ENCODE measurements at regions of chr12 and their contacts with region 1.

Region 1: GRCh38 chr12:101939856-101940265 is 62.5 kb downstream of the DRAM1 start:
- DNase-seq: peak; percentile 67 to 80
- H3K4me3 ChIP-seq: no peak overlapping the region
- H3K4me3 Mint-ChIP-seq: peak overlapping the region; percentile 30
- H3K27ac Mint-ChIP-seq: peak overlapping the region; percentile 76
- H3K4me1 ChIP-seq: peaks cover 15% of the 10 kb centered on the region
- H3K4me1 Mint-ChIP-seq: no peaks in the 10 kb centered on the region
- H3K27me3 ChIP-seq: no peaks in the 10 kb centered on the region
- H3K27me3 Mint-ChIP-seq: no peaks in the 10 kb centered on the region
- CTCF ChIP-seq: peak; percentile 76 to 81

Region 2: GRCh38 chr12:101773650-101774162 is 166.2 kb before region 1 on chr12:
- CTCF ChIA-PET with region 1: no interaction called
- POLR2A ChIA-PET with region 1: no interaction called
- intact Hi-C with region 1: loop called (anchors 5 kb)
- DNase-seq: peak; percentile 53 to 65
- H3K4me3 ChIP-seq: no peak overlapping the region
- H3K4me3 Mint-ChIP-seq: no peak overlapping the region
- H3K27ac Mint-ChIP-seq: no peak overlapping the region
- H3K4me1 ChIP-seq: no peaks in the 10 kb centered on the region
- H3K4me1 Mint-ChIP-seq: peaks cover 7% of the 10 kb centered on the region
- H3K27me3 ChIP-seq: no peaks in the 10 kb centered on the region
- H3K27me3 Mint-ChIP-seq: no peaks in the 10 kb centered on the region
- CTCF ChIP-seq: peak; percentile 84 to 91

Region 3: GRCh38 chr12:101857043-101857558 is 82.8 kb before region 1 on chr12:
- CTCF ChIA-PET with region 1: no interaction called
- POLR2A ChIA-PET with region 1: no interaction called
- intact Hi-C with region 1: no loop called
- DNase-seq: no peak
- H3K4me3 ChIP-seq: no peak overlapping the region
- H3K4me3 Mint-ChIP-seq: no peak overlapping the region
- H3K27ac Mint-ChIP-seq: no peak overlapping the region
- H3K4me1 ChIP-seq: peaks cover 12% of the 10 kb centered on the region
- H3K4me1 Mint-ChIP-seq: peaks cover 13% of the 10 kb centered on the region
- H3K27me3 ChIP-seq: no peaks in the 10 kb centered on the region
- H3K27me3 Mint-ChIP-seq: no peaks in the 10 kb centered on the region
- CTCF ChIP-seq: no peak

Region 4: DNA sequence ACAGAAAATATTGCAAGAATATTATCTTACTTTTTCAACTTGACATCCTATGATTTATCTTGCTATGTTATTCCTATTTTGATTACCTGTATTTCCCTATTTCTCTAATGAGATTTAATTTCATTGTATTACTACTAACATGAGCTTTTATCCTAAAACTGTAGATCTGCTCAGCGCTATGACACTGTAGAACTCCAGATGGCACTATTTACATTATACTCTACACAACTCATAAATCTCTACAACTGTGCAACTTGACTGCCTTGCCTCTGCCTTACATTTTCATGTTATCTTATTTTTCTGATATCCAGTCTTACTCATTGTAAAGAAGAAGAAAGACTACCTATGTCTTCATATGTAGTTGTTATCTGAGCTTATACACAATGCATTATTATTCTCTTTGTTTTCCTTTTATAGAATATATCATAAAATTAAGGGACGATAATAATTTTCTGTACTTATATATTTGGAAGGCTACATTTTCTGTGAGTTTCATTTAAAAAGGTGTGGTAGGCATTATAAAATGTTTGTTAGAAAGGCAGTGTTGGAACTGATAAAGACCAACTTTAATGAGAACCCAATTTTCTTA is 155.9 kb after region 1 on chr12:
- CTCF ChIA-PET with region 1: no interaction called
- POLR2A ChIA-PET with region 1: no interaction called
- intact Hi-C with region 1: loop called (anchors 2 kb)
- DNase-seq: peak in 1 of 2 experiments; percentile 12
- H3K4me3 ChIP-seq: no peak overlapping the region
- H3K4me3 Mint-ChIP-seq: no peak overlapping the region
- H3K27ac Mint-ChIP-seq: no peak overlapping the region
- H3K4me1 ChIP-seq: no peaks in the 10 kb centered on the region
- H3K4me1 Mint-ChIP-seq: no peaks in the 10 kb centered on the region
- H3K27me3 ChIP-seq: no peaks in the 10 kb centered on the region
- H3K27me3 Mint-ChIP-seq: no peaks in the 10 kb centered on the region
- CTCF ChIP-seq: peak; percentile 44 to 50

Region 5: GRCh38 chr12:102169922-102170621 is 230.2 kb after region 1 on chr12:
- CTCF ChIA-PET with region 1: no interaction called
- POLR2A ChIA-PET with region 1: no interaction called
- intact Hi-C with region 1: loop called (anchors 5 kb)
- DNase-seq: no peak
- H3K4me3 ChIP-seq: no peak overlapping the region
- H3K4me3 Mint-ChIP-seq: no peak overlapping the region
- H3K27ac Mint-ChIP-seq: no peak overlapping the region
- H3K4me1 ChIP-seq: no peaks in the 10 kb centered on the region
- H3K4me1 Mint-ChIP-seq: no peaks in the 10 kb centered on the region
- H3K27me3 ChIP-seq: no peaks in the 10 kb centered on the region
- H3K27me3 Mint-ChIP-seq: no peaks in the 10 kb centered on the region
- CTCF ChIP-seq: peak; percentile 61 to 65

Region 6: DNA sequence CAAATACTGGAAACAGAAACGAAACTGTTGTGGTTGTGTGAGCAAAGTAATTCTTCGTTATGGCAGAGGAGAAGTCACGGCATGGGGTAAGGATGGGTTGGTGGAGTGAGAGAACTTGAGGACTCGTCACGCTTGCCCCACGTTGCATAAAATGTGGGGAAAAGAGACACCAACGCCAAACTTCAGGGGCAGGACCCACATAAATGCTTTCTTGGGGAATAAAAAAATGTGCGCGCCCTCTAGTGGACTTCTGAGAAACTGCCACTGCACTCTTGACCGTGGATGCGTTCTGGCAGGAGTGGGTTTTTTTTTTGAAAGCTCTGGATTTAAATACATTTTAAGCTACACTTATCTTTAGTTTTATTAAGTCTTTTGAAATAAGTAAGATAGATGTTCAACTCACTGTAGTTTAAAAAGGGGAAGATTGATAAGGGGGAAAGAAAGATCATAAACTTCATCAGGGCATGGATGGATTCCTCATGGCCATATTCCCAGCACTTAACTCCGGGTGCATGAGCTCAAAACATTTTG is 544.6 kb after region 1 on chr12:
- CTCF ChIA-PET with region 1: interaction called, 3 read pairs
- POLR2A ChIA-PET with region 1: no interaction called
- intact Hi-C with region 1: loop called (anchors 1 kb)
- DNase-seq: peak; percentile 34 to 42
- H3K4me3 ChIP-seq: no peak overlapping the region
- H3K4me3 Mint-ChIP-seq: no peak overlapping the region
- H3K27ac Mint-ChIP-seq: peak overlapping the region; percentile 33
- H3K4me1 ChIP-seq: no peaks in the 10 kb centered on the region
- H3K4me1 Mint-ChIP-seq: no peaks in the 10 kb centered on the region
- H3K27me3 ChIP-seq: no peaks in the 10 kb centered on the region
- H3K27me3 Mint-ChIP-seq: no peaks in the 10 kb centered on the region
- CTCF ChIP-seq: peak; percentile 84 to 85

Region 7: DNA sequence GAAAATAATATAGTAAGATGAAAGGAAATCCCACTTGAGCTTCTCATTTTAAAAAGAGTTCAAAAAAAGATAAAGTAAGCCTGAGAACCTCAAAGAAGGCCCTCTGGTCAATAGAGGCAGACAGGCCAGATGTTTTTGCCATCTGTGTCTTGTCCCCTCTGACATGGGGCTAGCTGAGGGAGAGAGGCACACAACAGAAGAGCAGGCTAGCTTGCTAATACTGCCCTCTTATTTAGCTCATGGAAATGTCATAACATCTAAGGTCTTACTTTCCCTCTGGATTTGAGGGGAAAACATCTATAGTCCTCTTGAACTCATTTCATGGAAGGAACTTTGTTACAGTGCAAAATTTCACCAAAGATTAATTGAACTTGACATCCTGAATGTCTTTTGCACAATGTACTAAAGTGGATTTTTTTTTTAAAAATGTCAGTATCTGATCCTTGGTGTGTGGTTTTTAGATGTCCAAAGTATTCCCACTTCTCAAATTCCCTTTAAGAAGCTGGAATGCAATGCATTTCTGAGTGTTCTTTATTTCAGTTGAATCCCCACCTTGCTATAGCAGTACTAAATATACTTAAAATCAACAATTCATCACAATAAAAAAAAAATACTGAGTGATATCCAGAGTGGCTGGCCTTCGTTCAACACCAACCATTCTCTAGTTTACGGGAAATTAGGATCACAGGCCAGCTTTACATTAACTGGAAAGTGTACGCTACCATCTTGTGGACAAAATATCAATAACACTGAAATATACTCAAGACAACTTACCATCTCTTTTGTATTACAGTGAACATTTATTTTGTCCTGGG is 800.5 kb after region 1 on chr12:
- CTCF ChIA-PET with region 1: no interaction called
- POLR2A ChIA-PET with region 1: no interaction called
- intact Hi-C with region 1: loop called (anchors 1 kb)
- DNase-seq: peak in 1 of 2 experiments; percentile 4
- H3K4me3 ChIP-seq: no peak overlapping the region
- H3K4me3 Mint-ChIP-seq: no peak overlapping the region
- H3K27ac Mint-ChIP-seq: no peak overlapping the region
- H3K4me1 ChIP-seq: no peaks in the 10 kb centered on the region
- H3K4me1 Mint-ChIP-seq: no peaks in the 10 kb centered on the region
- H3K27me3 ChIP-seq: no peaks in the 10 kb centered on the region
- H3K27me3 Mint-ChIP-seq: no peaks in the 10 kb centered on the region
- CTCF ChIP-seq: peak in 1 of 2 experiments; percentile 36

Region 8: GRCh38 chr12:102811110-102811737 is 871.4 kb after region 1 on chr12:
- CTCF ChIA-PET with region 1: no interaction called
- POLR2A ChIA-PET with region 1: no interaction called
- intact Hi-C with region 1: loop called (anchors 2 kb)
- DNase-seq: peak; percentile 43 to 62
- H3K4me3 ChIP-seq: no peak overlapping the region
- H3K4me3 Mint-ChIP-seq: no peak overlapping the region
- H3K27ac Mint-ChIP-seq: no peak overlapping the region
- H3K4me1 ChIP-seq: no peaks in the 10 kb centered on the region
- H3K4me1 Mint-ChIP-seq: no peaks in the 10 kb centered on the region
- H3K27me3 ChIP-seq: no peaks in the 10 kb centered on the region; the same call in 1 of the 2 replicates
- H3K27me3 Mint-ChIP-seq: peaks cover 13% of the 10 kb centered on the region
- CTCF ChIP-seq: peak; percentile 61 to 80